ENCODE measurements at regions of chr1 and their contacts with region 1.

Region 1: DNA sequence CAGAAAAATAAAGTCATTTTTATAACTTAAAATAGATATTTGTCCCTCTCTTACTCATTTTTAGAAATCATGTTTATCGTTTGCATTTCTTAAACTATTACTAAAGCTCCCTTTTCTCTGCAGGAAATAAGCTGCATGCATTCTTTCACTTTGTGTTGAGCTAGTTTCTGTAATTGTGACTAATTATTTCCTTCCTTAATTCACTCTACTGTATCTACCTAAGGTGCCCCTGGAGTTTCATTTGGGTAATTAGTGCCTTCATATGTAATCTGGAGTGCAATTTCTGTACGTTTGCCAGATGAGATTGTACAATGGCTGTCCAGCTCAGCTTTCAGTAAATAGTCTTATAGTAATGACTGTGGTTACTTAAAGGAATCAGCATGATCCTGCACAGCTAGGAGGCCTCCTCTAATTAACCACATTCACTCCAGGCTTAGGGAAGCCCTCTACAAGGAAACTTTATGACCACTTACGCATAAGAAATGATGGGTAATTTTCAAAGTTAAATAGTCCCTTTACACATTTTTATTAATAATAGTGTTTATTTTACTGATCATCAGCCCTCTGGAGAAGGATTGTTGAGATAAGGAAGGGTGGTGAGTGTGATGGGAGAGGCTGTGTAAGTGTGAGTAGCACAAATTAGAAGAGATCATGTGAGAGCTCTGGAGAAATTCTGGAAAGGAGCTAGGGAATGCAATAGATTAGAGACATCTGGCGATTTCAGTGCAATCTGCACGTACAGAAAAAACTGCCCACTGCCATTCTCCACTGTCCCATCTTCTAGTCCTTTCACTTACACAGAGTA is 86.8 kb downstream of the LRRC8C start:
- DNase-seq: peak; percentile 77
- H3K4me3 Mint-ChIP-seq: peak overlapping the region; percentile 74
- H3K27ac Mint-ChIP-seq: peak overlapping the region; percentile 98
- H3K4me1 Mint-ChIP-seq: peaks cover 66% of the 10 kb centered on the region
- H3K27me3 Mint-ChIP-seq: no peaks in the 10 kb centered on the region

Region 2: DNA sequence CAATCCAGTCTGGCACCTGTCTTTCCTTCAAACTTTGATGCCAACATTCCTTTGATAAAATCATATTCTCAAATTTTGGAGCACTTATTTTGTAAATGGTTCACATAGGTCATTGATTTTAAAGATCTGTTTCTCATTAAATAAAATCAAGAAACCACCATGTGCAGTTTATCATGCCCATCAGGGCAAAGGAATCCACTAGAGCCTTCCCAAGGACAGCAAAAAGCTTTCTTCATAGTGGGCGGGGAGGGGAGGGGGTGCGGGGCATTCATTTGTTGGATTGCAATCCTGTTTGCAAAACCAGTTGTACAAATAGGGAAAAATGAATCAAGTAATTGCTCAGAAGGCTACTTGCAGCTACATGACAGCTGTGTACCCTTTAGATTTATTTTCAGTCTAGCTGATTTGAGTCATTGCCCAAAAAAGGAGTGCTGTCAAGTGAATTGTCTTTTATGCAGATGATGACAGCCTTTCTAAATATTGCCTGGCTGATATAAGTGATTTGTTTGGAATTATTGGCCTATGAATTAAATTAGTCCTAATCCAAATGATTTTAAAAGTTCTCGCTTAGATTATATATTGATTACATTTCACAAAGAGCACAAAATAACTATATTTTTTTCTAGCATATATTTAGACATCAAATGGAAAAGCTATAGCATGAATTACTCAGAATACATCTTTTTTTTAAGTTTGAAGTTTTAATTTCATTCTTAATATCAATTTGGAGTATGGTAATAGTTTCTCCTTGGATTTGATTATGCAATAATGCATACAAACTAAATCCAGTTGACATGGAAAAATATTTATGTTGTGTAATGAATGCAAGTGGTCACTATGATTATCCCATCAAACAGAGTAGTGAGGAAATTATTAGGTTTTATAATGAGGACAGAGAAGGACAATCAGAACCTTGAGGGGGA is 171.9 kb before region 1 on chr1:
- intact Hi-C with region 1: loop called (anchors 1 kb)
- DNase-seq: peak; percentile 43
- H3K4me3 Mint-ChIP-seq: peak overlapping the region; percentile 28
- H3K27ac Mint-ChIP-seq: peak overlapping the region; percentile 92
- H3K4me1 Mint-ChIP-seq: peaks cover 78% of the 10 kb centered on the region
- H3K27me3 Mint-ChIP-seq: peaks cover 2% of the 10 kb centered on the region

Region 3: GRCh38 chr1:89657886-89658285 is 61.8 kb before region 1 on chr1:
- intact Hi-C with region 1: loop called (anchors 1 kb)
- DNase-seq: peak; percentile 83
- H3K4me3 Mint-ChIP-seq: peak overlapping the region; percentile 40
- H3K27ac Mint-ChIP-seq: peak overlapping the region; percentile 79
- H3K4me1 Mint-ChIP-seq: peaks cover 70% of the 10 kb centered on the region
- H3K27me3 Mint-ChIP-seq: no peaks in the 10 kb centered on the region

Region 4: DNA sequence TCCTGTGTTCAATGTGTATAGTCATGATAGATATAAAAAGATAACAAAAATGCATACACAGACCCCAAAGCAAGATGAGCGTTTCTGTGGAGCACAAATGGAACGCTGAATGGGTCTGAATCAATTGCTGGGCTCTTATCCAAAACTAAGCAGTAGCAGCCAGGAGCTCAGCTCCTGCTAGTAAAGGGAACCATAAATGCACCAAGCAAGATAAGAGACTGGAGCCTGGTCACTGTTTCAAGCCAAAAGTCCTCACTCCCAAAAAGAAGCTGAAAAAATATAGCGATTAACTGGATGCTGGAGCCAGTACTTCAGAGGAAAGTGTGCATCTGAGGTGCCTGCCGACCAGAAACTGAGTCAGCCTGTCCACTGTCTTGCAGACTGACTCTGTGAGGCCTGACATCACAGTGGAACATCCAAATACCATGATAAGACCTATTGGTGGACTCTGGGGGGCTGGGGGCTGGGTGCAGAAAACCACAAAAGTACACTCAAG is 17.9 kb before region 1 on chr1:
- intact Hi-C with region 1: loop called (anchors 1 kb)
- DNase-seq: no peak
- H3K4me3 Mint-ChIP-seq: no peak overlapping the region
- H3K27ac Mint-ChIP-seq: peak overlapping the region; percentile 71
- H3K4me1 Mint-ChIP-seq: peaks cover 62% of the 10 kb centered on the region
- H3K27me3 Mint-ChIP-seq: no peaks in the 10 kb centered on the region

Region 5: GRCh38 chr1:89746424-89747149 is 26.9 kb after region 1 on chr1:
- intact Hi-C with region 1: loop called (anchors 1 kb)
- DNase-seq: no peak
- H3K4me3 Mint-ChIP-seq: peak overlapping the region; percentile 57
- H3K27ac Mint-ChIP-seq: peak overlapping the region; percentile 86
- H3K4me1 Mint-ChIP-seq: peaks cover 22% of the 10 kb centered on the region
- H3K27me3 Mint-ChIP-seq: no peaks in the 10 kb centered on the region

Region 6: GRCh38 chr1:89780721-89781120 is 61.0 kb after region 1 on chr1:
- intact Hi-C with region 1: loop called (anchors 1 kb)
- DNase-seq: peak; percentile 68
- H3K4me3 Mint-ChIP-seq: peak overlapping the region; percentile 64
- H3K27ac Mint-ChIP-seq: peak overlapping the region; percentile 95
- H3K4me1 Mint-ChIP-seq: peaks cover 40% of the 10 kb centered on the region
- H3K27me3 Mint-ChIP-seq: no peaks in the 10 kb centered on the region

Region 7: DNA sequence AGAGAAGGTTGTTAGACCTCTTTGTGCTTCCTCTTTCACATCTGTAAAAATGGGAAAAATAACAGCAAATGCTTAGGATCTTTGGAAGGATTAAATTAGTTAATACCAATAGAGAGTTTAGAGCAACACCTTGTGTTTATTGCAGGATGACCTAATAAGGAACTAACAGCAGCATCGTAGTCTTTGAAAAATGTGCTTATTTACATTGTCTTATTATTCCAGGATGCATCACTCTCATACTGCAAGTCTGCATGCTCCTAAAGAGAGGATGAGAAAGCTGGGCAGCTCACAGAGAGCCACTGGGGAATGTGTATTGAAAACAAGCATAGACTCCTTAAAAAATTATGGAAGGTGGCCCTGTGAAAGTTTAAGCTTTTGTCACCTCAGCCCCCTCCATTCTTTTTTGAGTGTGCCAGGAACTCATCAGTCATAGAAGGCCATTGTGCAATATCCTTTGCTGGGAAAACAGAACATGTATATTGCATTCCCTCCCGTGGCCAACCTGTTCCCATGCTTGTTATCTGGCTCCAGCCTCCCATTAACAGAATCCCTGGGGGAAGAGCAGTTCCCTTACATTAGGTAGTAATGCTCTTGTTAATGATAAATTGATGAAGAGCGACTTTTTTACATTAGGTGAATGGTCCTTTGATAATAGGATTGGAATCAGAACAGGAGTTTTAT is 455.9 kb after region 1 on chr1:
- intact Hi-C with region 1: no loop called
- DNase-seq: no peak
- H3K4me3 Mint-ChIP-seq: no peak overlapping the region
- H3K27ac Mint-ChIP-seq: no peak overlapping the region
- H3K4me1 Mint-ChIP-seq: no peaks in the 10 kb centered on the region
- H3K27me3 Mint-ChIP-seq: peaks cover 2% of the 10 kb centered on the region